Panc1 (cell line): ENCODE measurements at regions of chr7 and their contacts with region 1.

Region 1: GRCh38 chr7:47266131-47266706 is 315.7 kb downstream of the TNS3 start:
- DNase-seq: peak; percentile 61
- ATAC-seq: peak; percentile 76
- H3K4me3 ChIP-seq: no peak overlapping the region
- H3K27ac ChIP-seq: peak overlapping the region; percentile 39; the same call in 1 of the 2 replicates
- H3K4me1 ChIP-seq: peaks cover 5% of the 10 kb centered on the region; the same call in 1 of the 2 replicates
- H3K27me3 ChIP-seq: no peaks in the 10 kb centered on the region
- CTCF ChIP-seq: peak; percentile 98

Region 2: DNA sequence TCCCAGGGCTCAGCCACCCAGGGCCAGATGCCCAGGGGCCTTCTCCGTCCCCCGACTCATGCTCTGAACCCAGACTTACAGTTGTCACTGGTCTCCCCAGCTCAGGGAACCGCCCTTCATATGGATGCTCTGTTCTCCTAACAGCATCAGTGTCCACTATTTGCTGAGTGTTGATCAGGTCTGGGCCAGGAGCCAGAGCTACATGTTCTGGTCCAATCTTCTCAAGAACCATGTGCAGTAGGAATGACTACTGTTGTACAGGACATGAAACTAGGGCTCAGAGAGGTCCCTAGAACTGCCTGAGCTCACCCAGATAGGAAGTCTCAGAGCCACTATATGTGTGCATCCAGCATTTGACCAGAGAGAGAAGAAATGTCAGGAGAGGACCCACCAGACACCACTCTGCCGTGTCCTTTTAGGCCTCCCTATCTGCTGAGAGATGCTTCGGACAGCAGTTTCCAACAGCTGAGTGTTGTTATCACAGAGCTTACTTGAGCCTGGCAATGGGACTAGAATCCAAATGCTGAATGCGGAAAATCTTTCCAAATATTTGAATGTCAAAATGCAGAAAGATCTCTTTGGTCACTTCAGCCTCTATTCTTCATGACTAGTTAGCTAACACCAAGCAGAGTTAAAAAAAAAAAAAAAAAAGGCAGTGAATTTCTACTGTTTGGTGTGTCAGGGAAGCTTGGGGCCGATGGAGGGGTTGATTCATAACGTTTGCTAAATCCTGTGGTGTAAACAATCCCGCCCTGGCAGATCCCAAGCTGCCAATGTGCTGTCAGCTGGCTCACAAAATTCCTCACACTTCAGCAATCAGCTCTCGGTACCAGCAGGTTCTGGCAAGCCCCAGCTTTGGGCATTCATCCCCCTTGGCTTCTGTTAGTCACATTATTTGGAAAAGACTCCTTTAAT is 69.6 kb after region 1 on chr7:
- CTCF ChIA-PET with region 1: no interaction called
- POLR2A ChIA-PET with region 1: interaction called, 18 read pairs
- in situ Hi-C with region 1: no loop called
- intact Hi-C with region 1: no loop called
- DNase-seq: no peak
- ATAC-seq: 0 out of 2 replicates have a peak, but pooled peaks have one; percentile 10
- H3K4me3 ChIP-seq: no peak overlapping the region
- H3K27ac ChIP-seq: no peak overlapping the region
- H3K4me1 ChIP-seq: peaks cover 16% of the 10 kb centered on the region; the same call in 1 of the 2 replicates
- H3K27me3 ChIP-seq: no peaks in the 10 kb centered on the region
- CTCF ChIP-seq: no peak

Region 3: DNA sequence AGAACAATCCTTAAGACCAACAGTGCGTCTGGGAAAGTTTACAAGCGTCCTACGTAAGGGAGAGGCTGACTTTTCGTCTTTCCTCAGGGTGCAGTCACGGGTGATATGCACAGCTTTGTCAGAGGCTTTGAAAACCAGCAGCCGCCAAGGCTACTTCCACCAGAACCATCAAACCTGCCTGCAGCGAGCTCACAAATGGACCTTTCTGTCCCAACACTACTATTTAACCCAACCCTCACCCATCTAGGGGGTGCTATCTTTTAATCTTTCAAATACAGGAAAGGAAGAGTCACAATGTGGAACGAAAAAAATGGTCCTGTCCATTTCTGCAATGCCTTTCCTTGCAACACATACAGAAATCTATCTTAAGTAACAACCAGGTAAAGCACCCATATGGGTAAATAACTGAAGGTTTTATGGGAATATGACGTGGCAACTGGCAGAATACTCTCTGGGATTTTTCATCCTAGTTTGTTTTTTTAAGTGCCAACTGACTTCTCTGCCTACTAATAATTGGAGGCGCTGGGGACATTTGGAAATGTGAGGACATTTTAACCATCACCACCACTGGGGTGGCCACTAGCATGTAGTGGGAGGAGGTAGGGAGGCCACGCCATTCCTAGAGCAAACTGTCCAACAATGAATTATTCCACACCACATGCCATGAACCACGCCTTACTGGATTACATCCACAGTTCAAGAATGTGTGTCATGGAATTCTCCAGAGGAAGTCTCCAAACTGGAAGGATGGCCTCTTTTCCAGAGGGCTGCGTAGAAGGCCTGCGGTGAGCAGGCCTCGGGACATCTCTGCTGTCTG is 291.2 kb after region 1 on chr7:
- CTCF ChIA-PET with region 1: no interaction called
- POLR2A ChIA-PET with region 1: no interaction called
- in situ Hi-C with region 1: no loop called
- intact Hi-C with region 1: no loop called
- DNase-seq: no peak
- ATAC-seq: peak; percentile 66
- H3K4me3 ChIP-seq: peak overlapping the region in 1 of 2 experiments; percentile 2; a peak in 1 of 4 replicates
- H3K27ac ChIP-seq: peak overlapping the region; percentile 99
- H3K4me1 ChIP-seq: peaks cover 96% of the 10 kb centered on the region
- H3K27me3 ChIP-seq: no peaks in the 10 kb centered on the region
- CTCF ChIP-seq: no peak

Region 4: GRCh38 chr7:47945261-47946001 is 679.2 kb after region 1 on chr7:
- CTCF ChIA-PET with region 1: no interaction called
- POLR2A ChIA-PET with region 1: no interaction called
- in situ Hi-C with region 1: no loop called
- intact Hi-C with region 1: loop called (anchors 5 kb)
- DNase-seq: peak; percentile 22
- ATAC-seq: peak; percentile 82
- H3K4me3 ChIP-seq: no peak overlapping the region
- H3K27ac ChIP-seq: peak overlapping the region; percentile 76
- H3K4me1 ChIP-seq: peaks cover 29% of the 10 kb centered on the region
- H3K27me3 ChIP-seq: no peaks in the 10 kb centered on the region
- CTCF ChIP-seq: peak; percentile 89

Region 5: GRCh38 chr7:49228426-49229098 is 1962.3 kb after region 1 on chr7:
- CTCF ChIA-PET with region 1: no interaction called
- POLR2A ChIA-PET with region 1: interaction called, 15 read pairs
- in situ Hi-C with region 1: no loop called
- intact Hi-C with region 1: no loop called
- DNase-seq: no peak
- ATAC-seq: no peak
- H3K4me3 ChIP-seq: no peak overlapping the region
- H3K27ac ChIP-seq: no peak overlapping the region
- H3K4me1 ChIP-seq: no peaks in the 10 kb centered on the region
- H3K27me3 ChIP-seq: no peaks in the 10 kb centered on the region
- CTCF ChIP-seq: no peak